Activated T-helper 2 cell treated with anti-CD3 and anti-CD28 coated beads, Interferon-gamma antibody, Interleukin-2, Interleukin-4, amounts not matched to agents 10 μg/mL and 5 μg/mL and 100 μg/mL, durations not matched to agents 14 hours and 24 hours and 36 hours (primary cell): ENCODE measurements at regions of chr15 and their contacts with region 1.

Region 1: DNA sequence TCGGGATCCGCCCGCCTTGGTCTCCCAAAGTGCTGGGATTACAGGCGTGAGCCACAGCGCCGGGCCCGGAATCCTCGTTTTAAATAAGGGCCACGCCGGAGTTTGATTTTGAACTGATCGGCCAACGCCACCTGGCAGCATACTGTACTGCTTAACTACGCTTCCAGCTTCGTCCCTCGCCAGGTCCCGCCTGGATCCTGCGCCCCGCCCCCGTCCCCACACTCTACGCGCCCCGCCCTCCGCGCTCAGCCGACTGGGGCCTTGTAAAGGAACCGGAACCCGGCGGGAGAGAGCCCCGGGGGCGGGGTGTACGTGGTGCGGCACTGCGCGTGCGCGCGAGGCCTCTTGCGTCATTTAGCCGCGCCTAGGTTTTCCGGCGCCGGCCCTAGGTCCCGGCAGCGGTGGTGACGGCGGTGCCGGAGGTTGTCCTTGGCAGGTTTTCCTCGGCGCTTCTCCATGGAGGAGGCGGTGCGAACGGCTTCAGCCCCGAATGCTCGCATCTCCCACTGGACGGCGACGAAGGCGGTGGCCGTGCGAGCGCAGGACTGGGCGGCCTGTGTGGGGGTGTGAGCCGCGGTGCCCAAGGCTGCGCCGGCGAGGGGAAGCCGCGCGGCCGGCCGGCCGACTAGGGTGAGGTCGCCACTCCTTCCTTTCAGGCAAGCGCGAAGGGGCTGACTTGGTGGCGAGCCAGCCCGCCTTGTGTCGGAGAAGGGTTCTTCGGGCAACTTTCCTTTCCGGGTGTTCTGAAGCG is at the start of gene NIPA2:
- DNase-seq: peak; percentile 98
- H3K4me3 Mint-ChIP-seq: peak within 1 kb of the TSS; percentile 88
- H3K27ac Mint-ChIP-seq: peak within 1 kb of the TSS; percentile 89
- H3K4me1 Mint-ChIP-seq: peaks cover 16% of the 10 kb centered on the region
- H3K27me3 Mint-ChIP-seq: no peaks in the 10 kb centered on the region
- total RNA-seq, gene NIPA2: 60.1 and 65.3 TPM in 2 replicates

Region 2: DNA sequence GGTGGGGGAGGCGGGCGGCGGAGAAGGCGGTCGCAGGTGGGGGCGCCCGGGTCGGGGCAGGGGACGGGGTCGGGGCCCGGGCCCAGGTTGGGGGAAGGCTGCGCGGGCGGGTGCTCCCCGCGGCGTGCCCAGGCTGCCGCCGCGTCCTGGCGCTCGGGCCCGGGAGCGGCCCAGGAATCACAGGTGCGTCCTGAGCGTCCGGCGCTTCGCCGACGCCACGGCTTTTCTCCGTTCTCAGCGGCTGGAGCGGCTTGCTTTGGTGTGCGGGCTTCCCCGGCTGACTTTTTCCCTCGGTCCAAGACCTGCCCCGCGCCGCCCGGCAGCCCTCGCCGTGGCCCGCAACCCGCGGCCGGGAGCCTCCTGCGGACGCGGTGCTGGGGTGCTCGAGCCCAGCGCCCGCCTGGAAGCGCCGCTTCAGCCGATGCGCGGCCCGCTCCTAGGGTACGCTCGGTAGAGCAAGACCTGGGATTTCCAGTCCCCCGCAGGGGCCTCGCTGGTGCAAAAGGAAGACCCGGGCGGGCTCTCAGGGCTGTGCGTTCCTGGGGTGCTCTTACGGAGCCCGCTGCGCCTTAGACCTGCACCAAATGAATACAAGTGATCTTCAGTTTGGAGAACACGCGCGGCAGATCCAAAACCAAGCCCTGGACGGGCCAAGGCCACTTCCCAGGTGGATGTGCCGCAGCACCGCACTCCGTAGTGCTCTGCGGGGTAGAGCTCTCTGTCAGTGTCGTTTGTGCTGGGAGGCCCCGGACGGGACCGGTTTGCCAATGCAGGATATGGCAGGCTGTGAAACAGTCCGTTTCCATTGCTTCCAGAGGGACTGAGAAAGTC is 51.4 kb before region 1 on chr15:
- intact Hi-C with region 1: loop called (anchors 10 kb)
- DNase-seq: peak; percentile 31
- H3K4me3 Mint-ChIP-seq: peak overlapping the region; percentile 80
- H3K27ac Mint-ChIP-seq: peak overlapping the region; percentile 65
- H3K4me1 Mint-ChIP-seq: peaks cover 22% of the 10 kb centered on the region
- H3K27me3 Mint-ChIP-seq: no peaks in the 10 kb centered on the region

Region 3: GRCh38 chr15:23039151-23039916 is 200.9 kb after region 1 on chr15 and contains the start of gene TUBGCP5:
- intact Hi-C with region 1: loop called (anchors 10 kb)
- DNase-seq: peak; percentile 98
- H3K4me3 Mint-ChIP-seq: peak within 1 kb of the TSS; percentile 99
- H3K27ac Mint-ChIP-seq: peak within 1 kb of the TSS; percentile 95
- H3K4me1 Mint-ChIP-seq: peaks cover 20% of the 10 kb centered on the region
- H3K27me3 Mint-ChIP-seq: no peaks in the 10 kb centered on the region
- total RNA-seq, gene TUBGCP5: 22.8 and 26.2 TPM in 2 replicates